ENCODE measurements at regions of chr7 and their contacts with region 1.

Region 1: DNA sequence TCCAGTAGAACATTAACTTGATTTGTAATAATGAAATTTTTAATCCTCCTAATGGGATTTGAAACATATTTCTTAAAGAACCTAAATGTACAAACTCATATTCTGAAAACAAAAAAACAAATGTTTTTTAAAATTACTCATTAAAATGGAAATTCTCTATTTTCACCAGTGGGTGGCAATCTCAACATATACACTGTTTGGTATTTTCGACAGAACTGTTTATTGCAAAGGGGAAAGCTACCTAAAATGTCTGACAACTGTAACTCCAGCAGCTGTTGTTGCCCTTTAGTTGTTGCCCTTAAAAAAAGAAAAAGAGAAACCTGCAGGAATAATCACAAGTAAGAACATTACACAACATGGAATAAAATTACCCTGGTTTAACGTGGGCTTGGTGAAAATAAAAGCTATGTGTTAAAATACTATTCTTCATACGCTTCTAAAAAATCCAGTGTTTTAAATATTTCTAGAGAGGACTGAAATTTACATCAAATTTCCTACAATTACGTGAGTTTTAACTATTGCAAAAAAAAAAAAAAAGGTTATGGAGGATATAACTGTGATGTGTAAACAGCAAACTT is 54.5 kb downstream of the COL1A2 start:
- DNase-seq: peak in 2 of 5 donors; percentile 15 to 16
- H3K4me3 ChIP-seq: no peak overlapping the region
- H3K4me3 Mint-ChIP-seq: no peak overlapping the region
- H3K27ac ChIP-seq: no peak overlapping the region
- H3K27ac Mint-ChIP-seq: no peak overlapping the region
- H3K4me1 ChIP-seq: no peaks in the 10 kb centered on the region
- H3K4me1 Mint-ChIP-seq: no peaks in the 10 kb centered on the region
- H3K27me3 ChIP-seq: no peaks in the 10 kb centered on the region
- H3K27me3 Mint-ChIP-seq: peaks cover 1 to 25% of the 10 kb centered on the region in 2 donors

Region 2: DNA sequence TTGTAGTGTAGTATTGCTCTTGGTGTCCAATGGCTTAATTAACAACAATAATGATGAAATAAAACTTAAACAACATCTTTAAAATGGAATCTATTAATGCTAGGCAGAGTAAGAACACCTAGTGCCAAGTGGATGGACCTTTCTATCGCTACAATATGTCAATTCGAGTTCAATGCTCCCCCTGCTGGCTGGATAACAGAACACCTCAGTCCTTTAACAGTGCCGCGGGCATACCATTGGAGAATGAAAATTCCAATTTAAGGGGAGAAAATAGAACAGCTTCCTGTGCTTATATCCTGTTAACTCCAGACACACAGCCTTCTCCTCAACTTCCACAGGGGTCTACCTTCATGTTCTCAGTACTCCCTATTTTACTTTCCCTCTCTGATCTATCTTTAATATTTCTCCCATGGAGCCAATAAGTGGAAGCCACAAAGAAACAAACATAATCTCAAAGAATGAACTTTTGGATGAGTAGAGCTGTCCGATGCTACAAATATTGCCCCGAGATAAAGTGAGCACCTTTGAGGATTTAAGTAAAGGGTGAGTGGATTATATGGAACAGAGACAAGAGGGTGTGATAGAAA is 13.1 kb before region 1 on chr7:
- CTCF ChIA-PET with region 1: interaction called, 11 read pairs
- POLR2A ChIA-PET with region 1: no interaction called
- DNase-seq: peak; percentile 16 to 64 (median 27)
- H3K4me3 ChIP-seq: no peak overlapping the region
- H3K4me3 Mint-ChIP-seq: no peak overlapping the region
- H3K27ac ChIP-seq: no peak overlapping the region
- H3K27ac Mint-ChIP-seq: peak overlapping the region in 3 of 8 donors; percentile 21 to 44 (median 23)
- H3K4me1 ChIP-seq: no peaks in the 10 kb centered on the region
- H3K4me1 Mint-ChIP-seq: peaks cover 0 to 4% (median 3%) of the 10 kb centered on the region in 3 donors
- H3K27me3 ChIP-seq: peaks cover 3% of the 10 kb centered on the region
- H3K27me3 Mint-ChIP-seq: peaks cover 5 to 23% of the 10 kb centered on the region in 2 donors

Region 3: GRCh38 chr7:94481279-94481678 is 32.0 kb after region 1 on chr7:
- CTCF ChIA-PET with region 1: no interaction called
- POLR2A ChIA-PET with region 1: no interaction called
- DNase-seq: no peak
- H3K4me3 ChIP-seq: no peak overlapping the region
- H3K4me3 Mint-ChIP-seq: no peak overlapping the region
- H3K27ac ChIP-seq: no peak overlapping the region
- H3K27ac Mint-ChIP-seq: no peak overlapping the region
- H3K4me1 ChIP-seq: no peaks in the 10 kb centered on the region
- H3K4me1 Mint-ChIP-seq: no peaks in the 10 kb centered on the region
- H3K27me3 ChIP-seq: no peaks in the 10 kb centered on the region
- H3K27me3 Mint-ChIP-seq: peaks cover 3 to 40% of the 10 kb centered on the region in 2 donors

Region 4: DNA sequence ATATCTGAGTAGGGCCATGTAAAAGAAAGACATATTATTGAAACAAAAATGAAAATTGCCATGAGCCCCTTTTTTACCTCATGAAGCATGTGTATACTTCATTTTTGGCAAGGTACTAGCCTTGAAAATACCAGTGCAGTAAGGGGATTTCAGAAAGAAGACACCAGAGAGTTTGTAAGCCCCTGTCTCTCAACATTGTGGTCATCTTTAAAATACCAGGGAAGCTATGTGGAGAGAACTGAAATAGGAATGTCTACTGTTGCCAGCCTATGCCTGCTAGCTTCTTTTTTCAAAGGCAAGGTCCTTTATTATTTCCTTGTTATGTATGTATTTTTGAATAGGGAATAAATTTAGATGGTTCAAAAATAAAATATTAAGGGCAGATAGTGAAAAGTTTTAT is 118.2 kb after region 1 on chr7:
- CTCF ChIA-PET with region 1: no interaction called
- POLR2A ChIA-PET with region 1: no interaction called
- DNase-seq: no peak
- H3K4me3 ChIP-seq: no peak overlapping the region
- H3K4me3 Mint-ChIP-seq: no peak overlapping the region
- H3K27ac ChIP-seq: no peak overlapping the region
- H3K27ac Mint-ChIP-seq: peak overlapping the region in 1 of 8 donors; percentile 76
- H3K4me1 ChIP-seq: no peaks in the 10 kb centered on the region
- H3K4me1 Mint-ChIP-seq: no peaks in the 10 kb centered on the region
- H3K27me3 ChIP-seq: no peaks in the 10 kb centered on the region
- H3K27me3 Mint-ChIP-seq: no peaks in the 10 kb centered on the region

Region 5: GRCh38 chr7:95476904-95477594 is 1027.8 kb after region 1 on chr7:
- CTCF ChIA-PET with region 1: interaction called, 20 read pairs
- POLR2A ChIA-PET with region 1: no interaction called
- DNase-seq: peak; percentile 21 to 61 (median 36)
- H3K4me3 ChIP-seq: no peak overlapping the region
- H3K4me3 Mint-ChIP-seq: peak overlapping the region in 5 of 7 donors; percentile 4 to 46 (median 20)
- H3K27ac ChIP-seq: no peak overlapping the region
- H3K27ac Mint-ChIP-seq: no peak overlapping the region
- H3K4me1 ChIP-seq: peaks cover 4% of the 10 kb centered on the region
- H3K4me1 Mint-ChIP-seq: peaks cover 3 to 8% (median 4%) of the 10 kb centered on the region in 3 donors
- H3K27me3 ChIP-seq: no peaks in the 10 kb centered on the region
- H3K27me3 Mint-ChIP-seq: peaks cover 0 to 8% of the 10 kb centered on the region in 2 donors

Measured in CD8-positive, alpha-beta memory T cell (primary cell).